IMR-90 (cell line): ENCODE measurements at regions of chr7 and their contacts with region 1.

Region 1: GRCh38 chr7:113015032-113015645 is 71.5 kb downstream of the GPR85 start:
- DNase-seq: peak; percentile 60
- ATAC-seq: peak; percentile 53
- H3K4me3 ChIP-seq: no peak overlapping the region
- H3K27ac ChIP-seq: no peak overlapping the region
- H3K4me1 ChIP-seq: peaks cover 2% of the 10 kb centered on the region; the same call in 1 of the 2 replicates
- H3K27me3 ChIP-seq: no peaks in the 10 kb centered on the region
- CTCF ChIP-seq: peak; percentile 65
- POLR2A ChIP-seq: no peak
- RAD21 ChIP-seq: peak; percentile 72

Region 2: GRCh38 chr7:113698556-113699220 is 683.5 kb after region 1 on chr7:
- CTCF ChIA-PET with region 1: no interaction called
- POLR2A ChIA-PET with region 1: no interaction called
- dilution Hi-C with region 1: no loop called
- in situ Hi-C with region 1: loop called (anchors 10 kb)
- intact Hi-C with region 1: loop called (anchors 2 kb)
- DNase-seq: peak; percentile 39
- ATAC-seq: peak; percentile 70
- H3K4me3 ChIP-seq: no peak overlapping the region
- H3K27ac ChIP-seq: no peak overlapping the region
- H3K4me1 ChIP-seq: no peaks in the 10 kb centered on the region
- H3K27me3 ChIP-seq: no peaks in the 10 kb centered on the region
- CTCF ChIP-seq: peak; percentile 70
- POLR2A ChIP-seq: no peak
- RAD21 ChIP-seq: peak; percentile 56